ENCODE measurements at regions of chr9 and their contacts with region 1.

Region 1: DNA sequence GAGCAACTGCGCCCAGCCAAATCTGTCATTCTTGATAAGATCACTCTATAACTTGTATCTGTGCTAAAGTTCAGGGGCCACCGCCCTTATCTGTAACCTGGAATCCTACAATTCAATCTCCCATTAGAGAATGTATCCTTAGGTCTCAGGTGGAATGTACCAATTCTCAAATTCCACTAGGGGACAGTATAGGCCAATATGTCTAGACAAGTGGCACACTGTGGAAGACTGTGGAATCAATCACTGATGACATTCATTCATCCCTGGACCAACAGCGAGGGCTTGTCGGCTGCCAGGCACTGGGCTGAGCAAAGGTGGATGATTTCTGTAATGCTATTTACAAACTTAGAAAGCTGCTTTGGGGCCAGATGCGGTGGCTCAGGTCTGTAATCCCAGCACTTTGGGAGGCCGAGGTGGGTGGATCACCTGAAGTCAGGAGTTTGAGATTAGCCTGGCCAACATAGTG is 28.7 kb upstream of the MEGF9 start:
- DNase-seq: peak; percentile 26
- H3K4me3 ChIP-seq: no peak overlapping the region
- H3K27ac ChIP-seq: no peak overlapping the region
- H3K4me1 ChIP-seq: peaks cover 18% of the 10 kb centered on the region
- H3K27me3 ChIP-seq: no peaks in the 10 kb centered on the region
- CTCF ChIP-seq: peak; percentile 52 to 55
- POLR2A ChIP-seq: no peak

Region 2: GRCh38 chr9:120619751-120620655 is 123.0 kb before region 1 on chr9:
- CTCF ChIA-PET with region 1: interaction called, 7 read pairs
- POLR2A ChIA-PET with region 1: no interaction called
- dilution Hi-C with region 1: no loop called
- intact Hi-C with region 1: loop called (anchors 5 kb)
- DNase-seq: peak; percentile 81
- H3K4me3 ChIP-seq: no peak overlapping the region
- H3K27ac ChIP-seq: no peak overlapping the region
- H3K4me1 ChIP-seq: no peaks in the 10 kb centered on the region
- H3K27me3 ChIP-seq: no peaks in the 10 kb centered on the region
- CTCF ChIP-seq: peak; percentile 67 to 68
- POLR2A ChIP-seq: no peak

Region 3: GRCh38 chr9:120730661-120731514 is 12.1 kb before region 1 on chr9:
- CTCF ChIA-PET with region 1: interaction called, 13 read pairs
- POLR2A ChIA-PET with region 1: interaction called, 4 read pairs
- dilution Hi-C with region 1: no loop called
- intact Hi-C with region 1: no loop called
- DNase-seq: peak; percentile 92
- H3K4me3 ChIP-seq: no peak overlapping the region
- H3K27ac ChIP-seq: no peak overlapping the region
- H3K4me1 ChIP-seq: peaks cover 15% of the 10 kb centered on the region
- H3K27me3 ChIP-seq: no peaks in the 10 kb centered on the region
- CTCF ChIP-seq: no peak
- POLR2A ChIP-seq: peak; percentile 38

Region 4: GRCh38 chr9:120755827-120756434 is 12.9 kb after region 1 on chr9:
- CTCF ChIA-PET with region 1: interaction called, 14 read pairs
- POLR2A ChIA-PET with region 1: no interaction called
- dilution Hi-C with region 1: no loop called
- intact Hi-C with region 1: no loop called
- DNase-seq: peak; percentile 65
- H3K4me3 ChIP-seq: no peak overlapping the region
- H3K27ac ChIP-seq: no peak overlapping the region
- H3K4me1 ChIP-seq: no peaks in the 10 kb centered on the region
- H3K27me3 ChIP-seq: no peaks in the 10 kb centered on the region
- CTCF ChIP-seq: peak; percentile 70 to 74
- POLR2A ChIP-seq: no peak

Region 5: GRCh38 chr9:121160025-121160424 is 417.0 kb after region 1 on chr9:
- CTCF ChIA-PET with region 1: no interaction called
- POLR2A ChIA-PET with region 1: no interaction called
- dilution Hi-C with region 1: no loop called
- intact Hi-C with region 1: no loop called
- DNase-seq: no peak
- H3K4me3 ChIP-seq: no peak overlapping the region
- H3K27ac ChIP-seq: no peak overlapping the region
- H3K4me1 ChIP-seq: peaks cover 3% of the 10 kb centered on the region
- H3K27me3 ChIP-seq: no peaks in the 10 kb centered on the region
- CTCF ChIP-seq: no peak
- POLR2A ChIP-seq: no peak

Region 6: DNA sequence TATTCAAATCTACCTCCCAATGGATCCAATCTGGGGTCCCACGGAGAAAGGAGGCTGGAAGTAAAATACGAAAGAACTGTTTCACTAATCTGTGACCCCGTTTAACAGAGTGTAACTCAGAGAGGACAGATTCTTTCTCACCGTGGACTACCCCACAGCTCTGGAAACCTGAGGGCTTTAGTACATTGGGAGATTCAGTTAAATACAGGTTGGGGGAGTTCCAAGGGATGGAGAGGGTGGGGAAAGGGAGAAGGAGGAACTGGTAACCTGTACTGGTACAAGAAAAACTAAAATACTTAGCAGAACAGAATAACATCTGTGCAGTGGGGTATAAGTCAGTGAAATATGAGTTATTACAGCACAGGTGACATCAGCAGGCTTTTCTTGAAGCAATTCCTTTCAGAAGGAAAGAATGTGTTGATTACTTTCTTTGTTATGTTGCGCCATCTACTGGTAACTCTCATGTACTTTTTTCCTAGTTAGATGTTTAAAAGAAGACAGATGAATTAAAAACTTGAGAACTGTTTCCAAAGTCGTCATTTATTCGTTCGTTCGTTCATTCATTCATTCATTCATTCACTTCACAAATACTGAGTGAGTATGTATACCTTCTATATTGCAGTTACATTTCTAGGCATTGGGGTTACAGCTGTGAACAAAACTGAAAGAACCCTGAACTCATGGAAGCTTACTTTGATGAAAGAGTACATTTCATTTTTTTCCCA is 657.1 kb after region 1 on chr9:
- CTCF ChIA-PET with region 1: no interaction called
- POLR2A ChIA-PET with region 1: no interaction called
- dilution Hi-C with region 1: no loop called
- intact Hi-C with region 1: loop called (anchors 10 kb)
- DNase-seq: peak; percentile 82
- H3K4me3 ChIP-seq: no peak overlapping the region
- H3K27ac ChIP-seq: no peak overlapping the region
- H3K4me1 ChIP-seq: peaks cover 21% of the 10 kb centered on the region
- H3K27me3 ChIP-seq: no peaks in the 10 kb centered on the region
- CTCF ChIP-seq: peak; percentile 25 to 35
- POLR2A ChIP-seq: no peak